ENCODE measurements at regions of chr5 and their contacts with region 1.

Region 1: GRCh38 chr5:36535378-36535777 is 71.0 kb upstream of the SLC1A3 start:
- DNase-seq: no peak
- ATAC-seq: no peak
- H3K4me3 ChIP-seq: no peak overlapping the region
- H3K27ac ChIP-seq: no peak overlapping the region
- H3K4me1 ChIP-seq: no peaks in the 10 kb centered on the region
- H3K27me3 ChIP-seq: peaks cover 45% of the 10 kb centered on the region
- CTCF ChIP-seq: no peak

Region 2: DNA sequence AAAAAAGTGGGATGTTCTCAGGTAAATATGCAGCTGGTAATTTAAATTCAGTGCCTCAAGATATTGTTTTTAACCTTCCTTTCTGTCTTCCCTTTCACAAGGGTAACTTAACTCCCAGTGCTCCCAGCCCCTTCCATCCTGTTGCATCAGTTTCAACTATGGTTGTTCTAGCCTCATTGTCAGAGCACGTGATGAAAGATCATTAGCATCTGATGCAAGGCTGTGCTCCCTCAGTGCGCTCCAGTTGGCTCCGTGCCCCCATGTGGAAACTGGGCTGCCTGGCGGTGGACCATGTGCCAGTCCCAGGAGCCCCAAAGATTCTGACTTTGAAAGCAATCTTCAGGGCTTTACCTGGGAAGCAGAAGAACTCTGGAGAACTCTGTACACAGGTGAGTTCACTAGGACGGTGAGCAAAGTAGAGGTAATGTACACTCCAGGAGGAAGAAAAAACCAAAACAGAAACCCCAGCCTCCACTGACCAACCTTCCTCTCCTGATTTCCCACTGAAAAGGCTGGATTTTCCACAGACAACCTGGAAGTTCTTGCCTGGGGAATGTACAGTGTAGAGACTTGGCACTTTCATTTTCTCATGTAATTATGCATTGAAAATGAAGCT is 168.0 kb after region 1 on chr5:
- CTCF ChIA-PET with region 1: no interaction called
- POLR2A ChIA-PET with region 1: interaction called, 11 read pairs
- intact Hi-C with region 1: no loop called
- DNase-seq: no peak
- ATAC-seq: no peak
- H3K4me3 ChIP-seq: no peak overlapping the region
- H3K27ac ChIP-seq: no peak overlapping the region
- H3K4me1 ChIP-seq: no peaks in the 10 kb centered on the region
- H3K27me3 ChIP-seq: peaks cover 49% of the 10 kb centered on the region
- CTCF ChIP-seq: no peak

Measured in PC-3 (cell line).